ENCODE measurements at regions of chr9 and their contacts with region 1.

Region 1: GRCh38 chr9:4689687-4690104 is 10.3 kb downstream of the CDC37L1 start:
- DNase-seq: no peak
- ATAC-seq: peak; percentile 29 to 39

Region 2: DNA sequence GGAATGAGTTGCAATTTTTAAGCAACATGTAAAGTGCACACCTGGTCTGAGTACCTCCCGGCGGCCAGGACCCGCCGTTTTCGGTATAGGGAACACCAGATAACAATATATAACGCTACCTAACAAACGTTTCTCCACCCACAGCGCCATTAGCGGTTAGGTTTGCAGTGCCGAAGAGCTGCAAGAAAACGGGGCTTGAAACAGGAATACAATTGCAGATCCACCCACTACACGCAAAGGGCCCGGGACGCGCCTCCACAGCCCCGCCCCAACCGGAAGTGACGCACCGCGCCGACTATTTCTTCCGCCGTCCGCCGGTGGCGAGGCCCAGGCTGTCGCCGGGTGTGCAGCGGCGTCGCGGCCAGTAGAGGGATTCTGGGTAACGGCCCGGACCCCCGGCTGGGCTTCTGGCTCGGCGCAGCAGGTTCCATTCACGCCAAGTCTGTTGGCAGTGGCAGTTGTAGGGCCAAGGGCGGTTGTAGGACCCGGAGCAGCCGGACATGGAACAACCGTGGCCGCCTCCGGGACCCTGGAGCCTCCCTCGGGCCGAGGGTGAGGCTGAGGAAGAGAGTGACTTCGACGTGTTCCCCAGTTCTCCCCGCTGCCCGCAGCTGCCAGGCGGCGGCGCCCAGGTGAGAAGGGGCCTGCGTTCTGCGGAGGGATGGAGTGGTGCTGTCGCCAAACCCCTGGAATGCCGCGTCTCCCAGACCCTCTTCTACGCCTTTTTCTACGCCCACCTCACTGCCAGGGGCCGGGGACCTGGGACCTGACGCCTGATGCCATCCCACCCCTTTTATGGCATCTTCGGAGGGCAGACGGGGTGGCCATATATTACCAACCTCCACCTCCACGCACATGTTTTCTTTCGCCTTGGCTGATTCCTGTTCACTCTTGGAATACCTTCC is 10.2 kb before region 1 on chr9 and contains the start of gene CDC37L1:
- intact Hi-C with region 1: no loop called
- DNase-seq: peak; percentile 98
- ATAC-seq: peak; percentile 99
- total RNA-seq, gene CDC37L1: 32.5 to 41.6 TPM

Region 3: GRCh38 chr9:4725706-4726442 is 36.2 kb after region 1 on chr9:
- intact Hi-C with region 1: loop called in 1 of 2 experiments (anchors 5 kb)
- DNase-seq: no peak
- ATAC-seq: no peak

Measured in left cardiac atrium (tissue), 4 donors.